Activated B cell treated with CpG ODN at 0.5 μM for 24 hours (primary cell): ENCODE measurements at regions of chr13 and their contacts with region 1.

Region 1: DNA sequence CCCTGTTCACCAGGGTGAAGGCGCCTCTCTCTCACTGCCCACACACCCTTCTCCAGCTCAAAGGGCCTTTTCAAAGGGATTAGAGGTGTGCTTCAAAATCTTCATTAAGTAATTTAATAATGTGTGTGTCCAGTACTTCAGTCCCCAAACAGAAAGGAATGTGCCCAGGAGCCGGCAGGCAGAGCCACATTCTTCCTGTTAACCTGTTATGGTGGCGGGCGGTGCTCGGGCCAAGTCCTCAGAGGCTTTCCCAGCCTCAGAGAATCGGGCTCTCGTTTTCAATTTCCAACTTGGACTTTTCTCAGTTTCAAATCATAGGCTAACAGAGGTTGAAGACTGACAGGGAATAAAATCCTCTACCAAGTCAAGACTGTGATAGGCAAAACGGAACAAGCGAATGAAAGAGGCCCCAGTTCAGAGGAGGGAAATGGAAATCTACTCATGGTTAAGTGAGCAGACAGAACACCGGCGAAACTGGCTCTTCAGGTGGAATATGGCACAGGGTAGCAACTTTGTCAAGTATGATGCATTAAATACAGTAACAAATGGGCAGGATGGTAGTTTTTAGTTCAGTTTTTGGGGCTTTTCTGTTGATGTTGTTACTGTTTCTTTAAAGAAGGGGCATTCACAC is 68.6 kb downstream of the FOXO1 start:
- DNase-seq: no peak
- ATAC-seq: no peak
- H3K4me3 Mint-ChIP-seq: peak overlapping the region; percentile 28
- H3K27ac Mint-ChIP-seq: peak overlapping the region; percentile 76
- H3K4me1 Mint-ChIP-seq: peaks cover 93% of the 10 kb centered on the region
- H3K27me3 Mint-ChIP-seq: no peaks in the 10 kb centered on the region
- CTCF ChIP-seq: no peak

Region 2: DNA sequence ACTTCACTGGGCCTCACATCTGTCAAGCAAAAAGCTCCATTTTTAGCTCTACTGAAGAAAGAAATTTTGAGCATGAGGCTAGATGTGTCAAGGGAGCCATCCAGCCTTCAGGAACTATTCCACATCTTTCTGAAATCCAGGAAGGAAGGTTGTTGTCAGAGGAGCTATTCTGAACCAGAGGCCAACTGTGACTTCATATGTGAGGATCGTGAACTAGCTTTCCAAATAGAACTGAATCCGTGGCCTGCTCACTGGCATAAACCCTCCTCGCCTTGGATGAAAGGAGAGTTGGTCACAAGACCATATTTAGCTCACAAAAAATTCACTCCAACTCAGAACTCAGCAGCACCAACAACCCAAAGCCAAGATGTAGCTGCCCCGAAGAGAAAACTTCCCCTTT is 127.2 kb before region 1 on chr13:
- CTCF ChIA-PET with region 1: no interaction called
- POLR2A ChIA-PET with region 1: no interaction called
- intact Hi-C with region 1: no loop called
- DNase-seq: no peak
- ATAC-seq: no peak
- H3K4me3 Mint-ChIP-seq: no peak overlapping the region
- H3K27ac Mint-ChIP-seq: no peak overlapping the region
- H3K4me1 Mint-ChIP-seq: peaks cover 12% of the 10 kb centered on the region
- H3K27me3 Mint-ChIP-seq: no peaks in the 10 kb centered on the region
- CTCF ChIP-seq: no peak

Region 3: GRCh38 chr13:40613192-40613818 is 15.4 kb after region 1 on chr13:
- CTCF ChIA-PET with region 1: no interaction called
- POLR2A ChIA-PET with region 1: interaction called, 4 read pairs
- intact Hi-C with region 1: loop called (anchors 1 kb)
- DNase-seq: no peak
- ATAC-seq: peak; percentile 90
- H3K4me3 Mint-ChIP-seq: peak overlapping the region; percentile 71
- H3K27ac Mint-ChIP-seq: peak overlapping the region; percentile 88
- H3K4me1 Mint-ChIP-seq: peaks cover 90% of the 10 kb centered on the region
- H3K27me3 Mint-ChIP-seq: no peaks in the 10 kb centered on the region
- CTCF ChIP-seq: no peak

Region 4: DNA sequence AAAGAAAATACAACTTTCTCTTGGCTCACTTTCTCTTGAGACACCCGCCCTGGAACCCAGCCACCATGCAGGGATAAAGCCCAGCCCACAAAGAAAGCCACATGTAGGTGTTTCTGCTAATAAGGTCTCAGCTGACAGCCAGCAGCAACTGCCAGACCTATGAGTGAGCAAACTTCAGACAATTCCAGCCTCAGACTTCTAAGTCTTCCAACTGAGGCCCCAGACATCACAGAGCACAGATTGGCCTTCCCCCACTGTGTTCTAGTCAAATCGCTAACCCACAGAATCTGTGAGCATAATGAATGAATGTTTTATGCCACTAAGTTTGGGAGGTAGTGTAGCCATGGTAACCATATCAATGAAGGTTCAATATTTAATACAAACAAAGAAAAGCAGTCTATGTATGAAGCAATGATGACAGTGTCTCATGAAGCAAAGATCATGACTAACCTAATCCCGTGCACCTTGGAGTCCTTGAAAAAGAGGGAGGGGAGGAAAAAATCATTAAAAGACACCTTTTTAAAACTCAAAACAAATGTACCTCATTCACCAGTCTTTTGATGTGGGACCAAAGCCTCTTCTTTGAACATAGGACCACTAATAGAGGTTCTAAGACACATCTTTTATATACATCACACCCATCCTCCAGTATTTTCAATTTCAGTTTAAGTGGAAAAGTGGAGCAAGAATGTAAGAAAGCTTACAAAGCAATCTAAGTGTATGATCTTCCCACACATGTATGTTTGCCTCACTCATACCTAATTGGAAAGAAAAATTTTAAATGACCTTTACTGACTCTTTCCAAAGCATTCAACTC is 166.9 kb after region 1 on chr13:
- CTCF ChIA-PET with region 1: no interaction called
- POLR2A ChIA-PET with region 1: no interaction called
- intact Hi-C with region 1: no loop called
- DNase-seq: no peak
- ATAC-seq: no peak
- H3K4me3 Mint-ChIP-seq: no peak overlapping the region
- H3K27ac Mint-ChIP-seq: no peak overlapping the region
- H3K4me1 Mint-ChIP-seq: peaks cover 16% of the 10 kb centered on the region
- H3K27me3 Mint-ChIP-seq: no peaks in the 10 kb centered on the region
- CTCF ChIP-seq: no peak